ENCODE measurements at regions of chr3 and their contacts with region 1.

Region 1: DNA sequence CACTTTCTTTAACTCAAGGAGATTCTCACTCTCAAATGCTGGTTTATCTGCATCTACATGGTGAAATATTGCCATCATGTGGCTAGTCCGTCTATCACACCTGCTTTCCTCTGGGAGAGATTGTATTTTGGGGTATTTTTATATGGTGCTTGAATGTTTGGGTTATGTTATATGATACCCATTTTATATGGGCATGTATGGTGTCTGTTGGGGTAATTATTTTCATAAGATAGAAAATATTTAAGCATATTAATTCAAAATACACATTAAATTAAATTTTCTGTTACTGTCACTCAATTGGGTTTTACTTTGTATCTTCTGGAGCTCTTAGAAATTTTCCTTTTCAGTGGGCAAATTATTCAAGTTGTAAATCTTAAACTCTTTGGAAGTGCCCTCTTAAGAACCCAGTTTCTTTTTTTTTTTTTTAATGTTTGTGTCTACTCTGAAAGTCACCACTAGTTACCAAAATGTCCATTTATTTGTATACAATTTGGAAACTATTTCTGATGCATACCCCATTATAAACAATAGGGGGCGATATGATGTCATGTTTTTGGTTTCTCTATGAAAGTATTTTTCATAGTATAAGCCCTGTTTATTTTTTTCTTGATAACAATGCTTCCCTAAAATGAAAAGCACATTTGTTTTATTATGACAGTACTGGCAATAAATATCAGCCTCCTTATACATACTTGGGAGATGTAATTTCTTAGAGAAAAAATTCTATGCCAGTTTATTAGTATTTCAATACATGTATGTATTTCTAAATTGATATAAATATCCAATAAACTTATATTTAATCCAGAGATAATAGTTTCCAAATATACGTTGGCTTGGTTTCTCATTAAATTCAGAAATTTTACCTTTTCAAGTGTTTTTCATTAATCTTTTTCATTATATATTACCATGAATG is 36.1 kb upstream of the PLSCR5 start:
- DNase-seq: peak; percentile 69
- H3K4me3 Mint-ChIP-seq: no peak overlapping the region
- H3K27ac Mint-ChIP-seq: no peak overlapping the region
- H3K4me1 Mint-ChIP-seq: no peaks in the 10 kb centered on the region
- H3K27me3 Mint-ChIP-seq: peaks cover 2% of the 10 kb centered on the region

Region 2: GRCh38 chr3:146065573-146066006 is 575.6 kb before region 1 on chr3:
- intact Hi-C with region 1: loop called (anchors 5 kb)
- DNase-seq: peak; percentile 58
- H3K4me3 Mint-ChIP-seq: no peak overlapping the region
- H3K27ac Mint-ChIP-seq: no peak overlapping the region
- H3K4me1 Mint-ChIP-seq: no peaks in the 10 kb centered on the region
- H3K27me3 Mint-ChIP-seq: no peaks in the 10 kb centered on the region

Region 3: DNA sequence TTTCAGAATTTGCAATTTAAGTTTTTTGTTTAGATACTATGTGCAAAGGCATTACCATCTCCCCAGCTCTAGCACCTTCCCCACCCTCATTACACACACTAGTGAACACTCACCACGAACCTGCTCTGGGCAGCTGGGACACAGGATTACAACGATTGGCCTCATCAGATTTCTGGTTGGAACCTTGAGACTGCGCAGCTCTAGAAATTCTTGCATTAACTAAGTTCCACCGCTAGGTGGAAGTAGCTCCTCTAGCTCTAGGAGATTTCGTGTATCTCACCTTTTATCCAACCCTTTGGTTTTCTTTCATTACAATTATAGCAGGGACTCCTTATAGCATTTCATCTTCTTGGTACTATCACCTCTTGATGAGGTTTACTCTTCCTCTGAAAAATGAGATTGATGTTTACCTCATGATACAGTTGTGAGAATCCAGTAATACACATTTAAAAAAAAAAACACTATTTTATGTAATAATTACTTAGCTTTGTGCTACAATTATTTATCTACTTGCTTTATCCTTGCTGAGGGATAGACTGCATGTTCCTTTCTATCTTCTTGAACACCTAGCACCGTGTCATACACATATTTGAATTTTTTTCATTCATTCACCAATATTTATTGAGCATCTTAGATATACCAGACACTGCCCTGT is 451.6 kb before region 1 on chr3:
- intact Hi-C with region 1: loop called (anchors 2 kb)
- DNase-seq: peak; percentile 73
- H3K4me3 Mint-ChIP-seq: no peak overlapping the region
- H3K27ac Mint-ChIP-seq: no peak overlapping the region
- H3K4me1 Mint-ChIP-seq: no peaks in the 10 kb centered on the region
- H3K27me3 Mint-ChIP-seq: peaks cover 8% of the 10 kb centered on the region

Region 4: GRCh38 chr3:146589899-146590508 is 51.2 kb before region 1 on chr3:
- intact Hi-C with region 1: loop called (anchors 1 kb)
- DNase-seq: no peak
- H3K4me3 Mint-ChIP-seq: no peak overlapping the region
- H3K27ac Mint-ChIP-seq: no peak overlapping the region
- H3K4me1 Mint-ChIP-seq: no peaks in the 10 kb centered on the region
- H3K27me3 Mint-ChIP-seq: peaks cover 30% of the 10 kb centered on the region

Measured in activated CD4-positive, alpha-beta T cell treated with anti-CD3 and anti-CD28 coated beads, Interleukin-2, amount 10 ng/mL, durations not matched to agents 24 days and 14 days (primary cell).